ENCODE measurements at regions of chr11 and their contacts with region 1.

Region 1: GRCh38 chr11:14499554-14500180 is at the start of gene COPB1:
- DNase-seq: peak; percentile 97
- H3K4me3 ChIP-seq: peak within 1 kb of the TSS; percentile 89
- H3K27ac ChIP-seq: peak within 1 kb of the TSS; percentile 82
- H3K4me1 ChIP-seq: peaks cover 37% of the 10 kb centered on the region; the same call in 1 of the 2 replicates
- H3K27me3 ChIP-seq: no peaks in the 10 kb centered on the region
- total RNA-seq, gene COPB1: 302 and 366 TPM in 2 replicates

Region 2: GRCh38 chr11:14454861-14455632 is 44.6 kb before region 1 on chr11:
- in situ Hi-C with region 1: loop called (anchors 5 kb)
- DNase-seq: peak; percentile 65
- H3K4me3 ChIP-seq: no peak overlapping the region
- H3K27ac ChIP-seq: peak overlapping the region; percentile 29; the same call in 1 of the 2 replicates
- H3K4me1 ChIP-seq: peaks cover 4% of the 10 kb centered on the region
- H3K27me3 ChIP-seq: no peaks in the 10 kb centered on the region